Dorsolateral prefrontal cortex (tissue), 120 donors: ENCODE measurements at regions of chr4 and their contacts with region 1.

Region 1: GRCh38 chr4:93710101-93710846 is 118.3 kb upstream of the ATOH1 start:
- DNase-seq: peak in 2 of 10 donors; percentile 35 to 50
- H3K4me3 ChIP-seq: no peak overlapping the region
- H3K27ac ChIP-seq: no peak overlapping the region
- H3K27me3 ChIP-seq: no peaks in the 10 kb centered on the region
- CTCF ChIP-seq: peak in 55 of 56 donors; percentile 10 to 83 (median 49)

Region 2: DNA sequence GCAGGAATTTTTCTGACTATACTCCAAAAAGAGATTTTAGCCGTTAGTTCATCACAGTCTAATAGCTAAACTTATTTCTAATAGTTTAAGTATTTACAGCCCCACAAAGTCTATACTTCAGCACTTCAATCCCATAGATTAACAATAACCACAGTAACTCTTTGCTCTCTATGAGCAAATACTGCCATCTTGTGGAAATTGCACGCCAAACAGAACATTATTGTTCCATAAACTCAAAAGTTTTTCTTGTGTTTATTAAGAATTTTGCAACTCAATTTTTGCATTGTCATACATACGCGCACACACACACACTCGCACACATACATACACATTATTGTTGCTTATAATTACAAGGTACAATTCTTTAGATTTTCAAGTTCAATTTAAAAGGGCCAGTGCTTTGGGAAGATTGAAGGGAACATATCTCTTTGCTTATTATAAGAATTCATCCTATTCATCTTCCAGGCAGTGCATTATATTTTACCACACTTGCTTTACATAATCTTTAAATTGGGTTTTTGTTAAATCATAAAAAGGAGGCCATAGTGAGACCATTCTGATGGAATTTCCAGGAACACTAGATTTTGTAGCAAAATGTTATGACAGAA is 54.5 kb after region 1 on chr4:
- intact Hi-C with region 1: loop called in 1 of 2 experiments (anchors 1 kb)
- DNase-seq: peak in 2 of 10 donors; percentile 17 to 21
- H3K4me3 ChIP-seq: peak overlapping the region in 6 of 59 donors; percentile 5 to 29 (median 13)
- H3K27ac ChIP-seq: no peak overlapping the region
- H3K27me3 ChIP-seq: no peaks in the 10 kb centered on the region
- CTCF ChIP-seq: peak; percentile 67 to 98 (median 84)